ENCODE measurements at regions of chr12 and their contacts with region 1.

Region 1: GRCh38 chr12:98955277-98955676 is 310.2 kb downstream of the APAF1 start:
- DNase-seq: peak; percentile 31 to 57
- H3K4me3 ChIP-seq: no peak overlapping the region
- H3K27ac ChIP-seq: no peak overlapping the region
- H3K4me1 ChIP-seq: no peaks in the 10 kb centered on the region
- H3K27me3 ChIP-seq: no peaks in the 10 kb centered on the region
- CTCF ChIP-seq: peak in 2 of 3 experiments; percentile 56 to 63; a peak in 3 of 4 replicates
- EP300 ChIP-seq: no peak
- POLR2A ChIP-seq: no peak
- RAD21 ChIP-seq: peak; percentile 55 to 65

Region 2: GRCh38 chr12:98922871-98923270 is 32.4 kb before region 1 on chr12:
- CTCF ChIA-PET with region 1: interaction called, 13 read pairs
- POLR2A ChIA-PET with region 1: no interaction called
- DNase-seq: no peak
- H3K4me3 ChIP-seq: no peak overlapping the region
- H3K27ac ChIP-seq: no peak overlapping the region
- H3K4me1 ChIP-seq: no peaks in the 10 kb centered on the region
- H3K27me3 ChIP-seq: no peaks in the 10 kb centered on the region
- CTCF ChIP-seq: no peak
- EP300 ChIP-seq: no peak
- POLR2A ChIP-seq: no peak
- RAD21 ChIP-seq: no peak

Region 3: GRCh38 chr12:98968896-98969295 is 13.6 kb after region 1 on chr12:
- CTCF ChIA-PET with region 1: interaction called, 34 read pairs
- POLR2A ChIA-PET with region 1: no interaction called
- DNase-seq: no peak
- H3K4me3 ChIP-seq: no peak overlapping the region
- H3K27ac ChIP-seq: no peak overlapping the region
- H3K4me1 ChIP-seq: no peaks in the 10 kb centered on the region
- H3K27me3 ChIP-seq: no peaks in the 10 kb centered on the region
- CTCF ChIP-seq: no peak
- EP300 ChIP-seq: no peak
- POLR2A ChIP-seq: no peak
- RAD21 ChIP-seq: no peak

Region 4: GRCh38 chr12:99053616-99054362 is 98.5 kb after region 1 on chr12:
- CTCF ChIA-PET with region 1: no interaction called
- POLR2A ChIA-PET with region 1: no interaction called
- DNase-seq: no peak
- H3K4me3 ChIP-seq: no peak overlapping the region
- H3K27ac ChIP-seq: no peak overlapping the region
- H3K4me1 ChIP-seq: no peaks in the 10 kb centered on the region
- H3K27me3 ChIP-seq: peaks cover 0 to 3% (median 0%) of the 10 kb centered on the region in 4 experiments; a peak in 1 of 7 replicates
- CTCF ChIP-seq: no peak
- EP300 ChIP-seq: no peak
- POLR2A ChIP-seq: no peak
- RAD21 ChIP-seq: no peak

Measured in H1 (cell line).